GM10248 (cell line): ENCODE measurements at regions of chr21 and their contacts with region 1.

Region 1: DNA sequence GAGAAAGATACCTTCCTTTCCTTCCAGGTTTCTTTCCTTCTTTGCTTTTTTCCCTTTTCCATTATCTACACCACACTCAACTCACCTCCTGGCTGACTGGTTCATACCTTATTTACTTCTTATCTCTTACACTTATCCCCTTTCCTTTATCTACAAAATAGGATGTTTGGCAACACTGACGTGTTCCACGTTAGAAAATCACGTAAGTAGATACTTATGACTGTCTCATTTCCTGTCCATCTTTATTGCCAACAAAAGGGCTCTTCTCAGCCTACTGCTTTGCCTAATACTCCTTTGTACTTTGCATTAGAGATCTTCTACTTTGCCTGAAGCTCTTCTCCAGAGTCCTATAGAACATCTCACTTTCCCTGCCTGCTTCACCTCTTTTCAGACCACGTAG is 25.1 kb downstream of the SYNJ1 start:
- DNase-seq: no peak
- CTCF ChIP-seq: no peak

Region 2: DNA sequence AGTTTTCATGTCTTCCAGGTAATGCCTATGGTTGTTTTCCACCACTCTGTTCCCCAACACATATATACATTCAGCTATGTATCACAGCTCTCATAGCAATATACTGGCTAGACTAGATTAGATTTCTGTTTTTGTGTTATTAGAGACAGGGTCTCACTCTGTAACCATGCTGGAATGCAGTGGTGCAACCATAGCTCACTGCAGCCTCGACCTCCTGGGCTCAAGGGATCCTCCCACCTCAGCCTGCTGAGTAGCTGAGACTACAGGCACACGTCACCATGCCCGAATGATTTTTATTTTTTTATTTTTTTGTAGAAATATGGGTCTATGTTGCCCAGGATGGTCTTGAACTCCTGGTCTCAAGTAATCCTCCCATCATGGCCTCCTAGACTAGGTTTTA is 12.6 kb before region 1 on chr21:
- CTCF ChIA-PET with region 1: interaction called, 11 read pairs
- POLR2A ChIA-PET with region 1: no interaction called
- DNase-seq: no peak
- CTCF ChIP-seq: no peak